ENCODE measurements at regions of chr15 and their contacts with region 1.

Region 1: GRCh38 chr15:27271258-27271897 is 300.4 kb downstream of the GABRG3 start:
- DNase-seq: no peak
- H3K4me3 ChIP-seq: no peak overlapping the region
- H3K27ac ChIP-seq: no peak overlapping the region
- H3K27me3 ChIP-seq: no peaks in the 10 kb centered on the region
- CTCF ChIP-seq: no peak

Region 2: DNA sequence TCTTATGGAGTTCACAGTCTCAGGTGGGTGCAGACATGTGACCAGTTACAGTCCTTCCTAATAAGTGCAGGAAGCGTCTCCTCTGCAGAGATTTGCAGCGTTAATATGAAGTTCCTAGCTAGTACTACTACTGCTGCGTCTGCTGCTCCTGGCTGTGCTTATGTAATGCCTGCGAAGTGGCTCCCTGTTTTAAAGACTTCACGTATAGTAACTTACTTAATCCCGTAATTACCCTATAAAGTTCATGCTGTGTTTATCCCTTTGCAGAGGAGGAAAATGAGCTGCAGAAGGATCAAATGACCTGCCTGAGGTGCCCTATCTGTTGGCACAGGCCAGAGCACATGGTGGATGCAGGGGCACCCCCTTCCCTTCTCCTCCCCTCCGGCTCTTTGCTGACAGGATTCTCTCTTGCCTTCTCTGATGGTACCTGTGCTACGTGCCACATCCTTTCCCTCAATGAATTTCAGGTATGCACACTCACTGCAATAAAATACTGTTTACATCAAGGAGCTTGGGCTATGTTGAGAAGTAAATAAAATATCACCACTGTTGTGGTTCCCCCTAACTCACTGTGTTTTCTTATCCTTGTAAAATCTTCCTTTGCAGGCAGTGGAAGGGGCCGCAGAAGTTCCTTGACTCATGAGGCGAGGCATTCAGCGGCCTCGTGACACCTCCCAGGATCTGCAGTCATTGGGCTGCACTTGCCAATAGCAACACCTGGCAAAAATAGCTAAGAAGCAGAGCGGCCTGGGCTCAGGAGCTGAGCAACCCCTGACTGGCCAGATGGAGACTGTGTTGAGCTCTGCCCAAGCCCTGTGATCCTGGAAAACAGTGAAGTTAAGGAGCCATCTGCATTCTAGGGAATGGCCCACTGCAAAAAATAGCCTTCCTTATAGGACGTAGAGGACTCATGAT is 1219.4 kb before region 1 on chr15:
- intact Hi-C with region 1: no loop called
- DNase-seq: no peak
- H3K4me3 ChIP-seq: peak overlapping the region in 2 of 59 donors; percentile 5 to 11
- H3K27ac ChIP-seq: peak overlapping the region in 8 of 59 donors; percentile 4 to 65 (median 30)
- H3K27me3 ChIP-seq: no peaks in the 10 kb centered on the region
- CTCF ChIP-seq: no peak

Region 3: DNA sequence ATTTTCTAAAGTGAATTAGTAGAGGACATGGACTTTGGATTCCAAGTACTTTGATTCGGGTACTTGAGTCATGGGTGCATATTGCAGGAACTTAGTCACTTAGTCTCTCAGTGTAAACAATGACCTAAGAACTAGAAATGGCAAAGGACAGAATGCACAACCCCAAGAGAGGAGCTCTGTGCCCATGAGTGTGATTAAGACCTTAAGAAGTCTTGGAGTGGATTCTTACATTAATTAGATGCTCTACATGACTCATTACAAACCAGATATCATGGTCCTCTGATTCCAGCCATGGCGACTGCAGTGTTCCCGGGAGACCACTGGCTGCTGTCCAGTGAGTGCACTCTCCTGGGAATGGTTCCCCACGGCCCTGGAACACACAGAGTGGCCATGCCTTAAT is 48.9 kb before region 1 on chr15:
- intact Hi-C with region 1: loop called in 1 of 2 experiments (anchors 10 kb)
- DNase-seq: no peak
- H3K4me3 ChIP-seq: no peak overlapping the region
- H3K27ac ChIP-seq: no peak overlapping the region
- H3K27me3 ChIP-seq: no peaks in the 10 kb centered on the region
- CTCF ChIP-seq: no peak